ENCODE measurements at regions of chr11 and their contacts with region 1.

Region 1: DNA sequence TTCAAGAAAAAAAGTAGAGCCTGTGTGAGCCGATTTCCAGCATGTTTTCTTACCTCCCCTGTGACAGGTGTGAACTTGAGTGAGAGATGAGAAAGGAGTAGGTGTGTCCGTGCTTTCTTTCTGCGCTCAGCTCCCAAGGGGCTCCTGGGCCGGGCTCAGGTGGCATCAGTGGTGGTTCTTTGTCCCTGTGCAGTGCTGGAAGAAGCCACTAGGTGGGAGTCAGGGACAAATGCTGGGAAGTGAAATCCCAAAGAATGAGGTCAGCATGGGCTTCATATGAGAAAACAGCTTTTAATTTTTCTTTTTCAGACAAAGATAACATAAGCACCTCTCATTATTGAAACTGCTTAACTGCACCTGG is 57.8 kb downstream of the PPFIBP2 start:
- DNase-seq: peak; percentile 79 to 86
- H3K4me3 ChIP-seq: no peak overlapping the region
- H3K4me3 Mint-ChIP-seq: no peak overlapping the region
- H3K27ac Mint-ChIP-seq: peak overlapping the region; percentile 90
- H3K4me1 ChIP-seq: peaks cover 51% of the 10 kb centered on the region
- H3K4me1 Mint-ChIP-seq: peaks cover 48% of the 10 kb centered on the region
- H3K27me3 ChIP-seq: no peaks in the 10 kb centered on the region
- H3K27me3 Mint-ChIP-seq: no peaks in the 10 kb centered on the region
- CTCF ChIP-seq: peak; percentile 92 to 95

Region 2: DNA sequence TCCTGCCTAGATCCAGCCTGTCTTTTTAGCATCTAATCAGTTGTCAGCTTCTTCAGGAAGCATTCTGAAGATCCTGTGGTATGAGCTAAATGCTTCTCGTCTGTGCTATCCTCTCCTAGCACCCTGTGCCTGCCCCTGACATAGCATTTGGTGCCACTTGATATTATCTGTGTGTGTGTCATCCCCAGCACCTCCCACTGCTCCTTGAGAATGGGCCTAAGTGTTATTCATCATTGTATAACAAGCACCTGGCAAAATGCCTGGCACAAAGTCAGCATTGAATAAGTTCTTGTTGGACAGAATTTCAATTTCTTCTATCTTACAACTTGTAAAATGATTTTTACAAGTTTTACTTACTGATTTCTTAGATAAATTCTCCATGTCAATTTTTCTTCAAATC is 114.4 kb before region 1 on chr11:
- CTCF ChIA-PET with region 1: no interaction called
- POLR2A ChIA-PET with region 1: no interaction called
- intact Hi-C with region 1: no loop called
- DNase-seq: no peak
- H3K4me3 ChIP-seq: no peak overlapping the region
- H3K4me3 Mint-ChIP-seq: no peak overlapping the region
- H3K27ac Mint-ChIP-seq: no peak overlapping the region
- H3K4me1 ChIP-seq: no peaks in the 10 kb centered on the region
- H3K4me1 Mint-ChIP-seq: no peaks in the 10 kb centered on the region
- H3K27me3 ChIP-seq: no peaks in the 10 kb centered on the region; the same call in 1 of the 2 replicates
- H3K27me3 Mint-ChIP-seq: peaks cover 11% of the 10 kb centered on the region
- CTCF ChIP-seq: no peak

Region 3: GRCh38 chr11:7513234-7514098 is 58.2 kb before region 1 on chr11 and contains the start of gene PPFIBP2:
- CTCF ChIA-PET with region 1: interaction called, 6 read pairs
- POLR2A ChIA-PET with region 1: no interaction called
- intact Hi-C with region 1: loop called (anchors 1 kb)
- DNase-seq: peak; percentile 79 to 90
- H3K4me3 ChIP-seq: peak within 1 kb of the TSS; percentile 87
- H3K4me3 Mint-ChIP-seq: peak within 1 kb of the TSS; percentile 80
- H3K27ac Mint-ChIP-seq: no peak within 1 kb of the TSS
- H3K4me1 ChIP-seq: 0 out of 2 replicates have a peak, but pooled peaks cover 5% of the 10 kb centered on the region
- H3K4me1 Mint-ChIP-seq: peaks cover 16% of the 10 kb centered on the region
- H3K27me3 ChIP-seq: no peaks in the 10 kb centered on the region
- H3K27me3 Mint-ChIP-seq: no peaks in the 10 kb centered on the region
- CTCF ChIP-seq: peak; percentile 67 to 79
- total RNA-seq, gene PPFIBP2: 72.5 and 79.8 TPM in 2 replicates

Region 4: GRCh38 chr11:7605186-7605943 is 33.7 kb after region 1 on chr11:
- CTCF ChIA-PET with region 1: interaction called, 11 read pairs
- POLR2A ChIA-PET with region 1: interaction called, 47 read pairs
- intact Hi-C with region 1: loop called (anchors 1 kb)
- DNase-seq: peak; percentile 77 to 83
- H3K4me3 ChIP-seq: peak overlapping the region; percentile 35
- H3K4me3 Mint-ChIP-seq: no peak overlapping the region
- H3K27ac Mint-ChIP-seq: no peak overlapping the region
- H3K4me1 ChIP-seq: peaks cover 69% of the 10 kb centered on the region
- H3K4me1 Mint-ChIP-seq: peaks cover 8% of the 10 kb centered on the region
- H3K27me3 ChIP-seq: no peaks in the 10 kb centered on the region
- H3K27me3 Mint-ChIP-seq: no peaks in the 10 kb centered on the region
- CTCF ChIP-seq: no peak

Region 5: GRCh38 chr11:7635137-7635536 is 63.5 kb after region 1 on chr11:
- CTCF ChIA-PET with region 1: interaction called, 4 read pairs
- POLR2A ChIA-PET with region 1: no interaction called
- intact Hi-C with region 1: loop called (anchors 1 kb)
- DNase-seq: no peak
- H3K4me3 ChIP-seq: no peak overlapping the region
- H3K4me3 Mint-ChIP-seq: no peak overlapping the region
- H3K27ac Mint-ChIP-seq: no peak overlapping the region
- H3K4me1 ChIP-seq: peaks cover 9% of the 10 kb centered on the region
- H3K4me1 Mint-ChIP-seq: peaks cover 4% of the 10 kb centered on the region
- H3K27me3 ChIP-seq: no peaks in the 10 kb centered on the region
- H3K27me3 Mint-ChIP-seq: no peaks in the 10 kb centered on the region
- CTCF ChIP-seq: no peak

Region 6: GRCh38 chr11:7665473-7666291 is 94.1 kb after region 1 on chr11:
- CTCF ChIA-PET with region 1: interaction called, 31 read pairs
- POLR2A ChIA-PET with region 1: no interaction called
- intact Hi-C with region 1: loop called (anchors 1 kb)
- DNase-seq: peak; percentile 87 to 90
- H3K4me3 ChIP-seq: no peak overlapping the region
- H3K4me3 Mint-ChIP-seq: no peak overlapping the region
- H3K27ac Mint-ChIP-seq: peak overlapping the region; percentile 11
- H3K4me1 ChIP-seq: no peaks in the 10 kb centered on the region
- H3K4me1 Mint-ChIP-seq: peaks cover 12% of the 10 kb centered on the region
- H3K27me3 ChIP-seq: no peaks in the 10 kb centered on the region
- H3K27me3 Mint-ChIP-seq: no peaks in the 10 kb centered on the region
- CTCF ChIP-seq: peak; percentile 92 to 94